Activated T-helper 1 cell treated with anti-CD3 and anti-CD28 coated beads, Interleukin-12 subunit alpha, Interleukin-12 subunit beta, Interleukin-2, Interleukin-4 antibody, amounts not matched to agents 30 ng/mL and 10 ng/mL and 1 ng/mL, durations not matched to agents 14 hours and 24 hours and 36 hours (primary cell): ENCODE measurements at regions of chr12 and their contacts with region 1.

Region 1: DNA sequence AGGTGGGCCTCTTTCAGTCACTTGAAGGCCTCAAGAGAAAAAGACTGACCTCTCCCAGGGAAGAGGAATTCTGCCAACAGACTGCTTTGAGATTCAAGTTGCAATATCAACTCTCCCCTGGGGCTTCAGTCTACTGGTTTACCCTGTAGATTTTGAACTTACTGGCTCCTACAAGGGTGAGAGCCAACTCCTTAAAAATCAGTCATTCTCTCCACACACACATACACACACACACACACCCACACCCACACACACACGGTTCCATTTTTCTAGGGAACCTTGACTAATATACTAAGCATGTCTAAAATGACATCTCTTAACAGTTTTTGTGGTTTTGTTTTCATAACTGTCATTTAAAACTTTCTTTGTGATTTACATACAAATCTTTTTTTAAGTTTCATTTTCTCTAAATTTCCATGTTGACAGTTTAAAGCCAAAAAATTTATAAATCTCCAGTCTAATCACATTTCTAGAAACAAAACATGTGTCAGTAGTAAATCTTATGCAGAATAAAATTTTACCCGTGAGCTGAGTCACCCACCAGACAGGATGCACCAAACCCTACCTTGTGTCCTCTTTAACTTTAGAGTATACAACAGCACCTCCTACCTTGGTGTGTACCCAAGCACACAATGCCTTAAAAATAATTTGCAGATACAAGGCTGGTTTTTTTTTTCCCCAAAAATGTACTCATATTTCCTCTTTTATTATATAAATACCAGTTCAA is 394.6 kb downstream of the AEBP2 start:
- DNase-seq: no peak
- H3K4me3 Mint-ChIP-seq: no peak overlapping the region
- H3K27ac Mint-ChIP-seq: no peak overlapping the region
- H3K4me1 Mint-ChIP-seq: peaks cover 8% of the 10 kb centered on the region
- H3K27me3 Mint-ChIP-seq: no peaks in the 10 kb centered on the region

Region 2: GRCh38 chr12:19683178-19683927 is 150.6 kb before region 1 on chr12:
- intact Hi-C with region 1: loop called (anchors 1 kb)
- DNase-seq: no peak
- H3K4me3 Mint-ChIP-seq: no peak overlapping the region
- H3K27ac Mint-ChIP-seq: no peak overlapping the region
- H3K4me1 Mint-ChIP-seq: peaks cover 28% of the 10 kb centered on the region
- H3K27me3 Mint-ChIP-seq: peaks cover 6% of the 10 kb centered on the region

Region 3: GRCh38 chr12:19757317-19757877 is 76.5 kb before region 1 on chr12:
- intact Hi-C with region 1: loop called (anchors 1 kb)
- DNase-seq: no peak
- H3K4me3 Mint-ChIP-seq: no peak overlapping the region
- H3K27ac Mint-ChIP-seq: no peak overlapping the region
- H3K4me1 Mint-ChIP-seq: no peaks in the 10 kb centered on the region
- H3K27me3 Mint-ChIP-seq: no peaks in the 10 kb centered on the region

Region 4: DNA sequence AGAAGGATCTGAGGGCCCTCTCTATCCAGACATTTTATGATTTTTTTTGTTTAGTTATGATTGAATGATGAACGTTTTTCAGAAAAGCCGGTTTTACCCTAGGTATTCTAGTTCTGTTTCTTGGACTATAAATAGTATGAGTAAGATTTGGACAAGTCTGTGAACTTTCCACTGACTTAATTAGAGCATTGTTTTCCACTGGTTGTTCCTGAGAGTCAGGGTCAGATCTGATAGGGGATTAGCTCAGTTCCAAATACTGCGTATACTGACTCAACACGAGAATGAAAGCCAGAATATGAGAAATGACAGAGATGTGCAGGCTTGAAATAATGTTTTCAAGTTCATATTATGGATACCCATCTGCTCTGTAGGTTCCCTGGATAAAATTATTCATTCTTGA is 33.1 kb before region 1 on chr12:
- intact Hi-C with region 1: loop called (anchors 1 kb)
- DNase-seq: no peak
- H3K4me3 Mint-ChIP-seq: no peak overlapping the region
- H3K27ac Mint-ChIP-seq: peak overlapping the region; percentile 40
- H3K4me1 Mint-ChIP-seq: no peaks in the 10 kb centered on the region
- H3K27me3 Mint-ChIP-seq: no peaks in the 10 kb centered on the region

Region 5: DNA sequence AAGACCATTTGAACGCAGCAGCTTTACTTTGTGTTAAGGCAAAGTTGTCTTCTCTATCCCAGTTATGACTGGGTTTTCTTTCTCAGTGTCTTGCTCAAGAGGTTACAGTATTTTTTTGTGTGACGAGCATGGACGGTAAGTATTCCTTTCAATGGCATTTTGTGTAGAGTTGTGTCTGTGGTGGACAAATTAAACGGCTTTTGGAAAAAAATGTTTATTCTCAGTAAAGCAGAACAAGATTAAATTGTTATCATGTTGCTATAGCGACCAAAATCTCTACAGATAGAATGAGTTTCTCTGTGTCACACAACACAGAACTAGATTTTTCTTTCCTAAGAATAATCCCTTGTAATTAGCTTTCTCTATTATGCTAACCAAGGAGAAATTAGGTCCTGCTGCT is 22.5 kb after region 1 on chr12:
- intact Hi-C with region 1: no loop called
- DNase-seq: no peak
- H3K4me3 Mint-ChIP-seq: no peak overlapping the region
- H3K27ac Mint-ChIP-seq: no peak overlapping the region
- H3K4me1 Mint-ChIP-seq: no peaks in the 10 kb centered on the region
- H3K27me3 Mint-ChIP-seq: no peaks in the 10 kb centered on the region